CD4-positive, alpha-beta T cell (primary cell): ENCODE measurements at regions of chr2 and their contacts with region 1.

Region 1: DNA sequence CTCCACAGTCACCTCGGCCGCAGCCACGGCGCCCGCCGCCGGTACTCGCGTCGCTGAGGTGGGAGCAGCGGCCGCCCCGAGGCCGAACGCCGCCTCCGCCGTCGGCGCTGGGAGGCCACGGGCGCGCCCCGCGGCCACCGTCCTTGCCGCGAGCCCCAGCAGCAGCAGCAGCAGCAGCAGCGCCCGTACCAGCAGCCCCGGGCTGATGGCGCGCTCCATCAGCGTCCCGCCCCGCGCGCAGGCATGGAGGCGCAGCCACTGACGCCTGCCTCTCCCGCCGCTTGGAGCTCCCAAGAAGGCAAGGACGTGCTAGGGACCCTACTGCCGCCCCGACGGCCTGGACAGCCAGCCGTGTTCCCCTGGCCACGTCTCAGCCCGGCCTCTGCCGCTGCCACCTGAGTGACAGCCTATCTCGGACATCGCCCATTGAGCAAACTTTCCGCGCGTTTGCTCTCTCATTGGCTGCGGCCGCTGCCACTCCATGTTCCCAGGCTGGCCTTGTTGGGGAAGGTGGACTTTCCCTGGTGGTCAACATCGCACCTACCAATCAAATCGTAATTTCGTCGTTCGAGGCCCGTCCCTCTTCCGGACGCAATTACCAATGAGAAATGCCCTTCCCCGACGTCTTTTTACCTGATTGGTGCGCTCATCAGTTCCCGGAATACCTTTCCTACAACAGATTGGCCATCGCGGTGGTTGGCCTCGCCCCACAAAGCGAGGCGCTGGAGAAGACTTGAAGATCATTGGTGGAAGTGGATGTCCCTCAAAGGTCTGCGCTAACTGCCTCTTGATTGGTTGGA is at the start of gene EIF2AK3:
- DNase-seq: peak; percentile 86 to 99 (median 89)
- ATAC-seq: peak; percentile 85
- H3K4me3 ChIP-seq: peak within 1 kb of the TSS; percentile 80
- H3K4me3 Mint-ChIP-seq: peak within 1 kb of the TSS; percentile 96
- H3K27ac ChIP-seq: peak within 1 kb of the TSS; percentile 93 to 97
- H3K27ac Mint-ChIP-seq: no peak within 1 kb of the TSS
- H3K4me1 ChIP-seq: peaks cover 30% of the 10 kb centered on the region
- H3K4me1 Mint-ChIP-seq: peaks cover 19% of the 10 kb centered on the region
- H3K27me3 ChIP-seq: no peaks in the 10 kb centered on the region
- H3K27me3 Mint-ChIP-seq: no peaks in the 10 kb centered on the region
- CTCF ChIP-seq: no peak
- total RNA-seq, gene EIF2AK3: 30.6 to 37.0 TPM

Region 2: GRCh38 chr2:88016086-88016959 is 610.9 kb before region 1 on chr2 and contains the start of gene RNU2-63P:
- CTCF ChIA-PET with region 1: no interaction called
- POLR2A ChIA-PET with region 1: no interaction called
- intact Hi-C with region 1: loop called in 1 of 2 experiments (anchors 5 kb)
- DNase-seq: peak; percentile 58 to 89 (median 70)
- ATAC-seq: peak; percentile 89
- H3K4me3 ChIP-seq: peak within 1 kb of the TSS; percentile 93
- H3K4me3 Mint-ChIP-seq: peak within 1 kb of the TSS; percentile 95
- H3K27ac ChIP-seq: peak within 1 kb of the TSS; percentile 67 to 93
- H3K27ac Mint-ChIP-seq: peak within 1 kb of the TSS; percentile 98
- H3K4me1 ChIP-seq: peaks cover 18% of the 10 kb centered on the region
- H3K4me1 Mint-ChIP-seq: peaks cover 26% of the 10 kb centered on the region
- H3K27me3 ChIP-seq: no peaks in the 10 kb centered on the region
- H3K27me3 Mint-ChIP-seq: no peaks in the 10 kb centered on the region
- CTCF ChIP-seq: no peak
- total RNA-seq, gene RNU2-63P: 2.6 to 3.1 TPM

Region 3: GRCh38 chr2:88590998-88591613 is 36.1 kb before region 1 on chr2:
- CTCF ChIA-PET with region 1: no interaction called
- POLR2A ChIA-PET with region 1: interaction called, 3 read pairs
- intact Hi-C with region 1: loop called in 1 of 2 experiments (anchors 5 kb)
- DNase-seq: peak in 8 of 14 experiments; percentile 8 to 72 (median 46)
- ATAC-seq: peak; percentile 76
- H3K4me3 ChIP-seq: no peak overlapping the region
- H3K4me3 Mint-ChIP-seq: no peak overlapping the region
- H3K27ac ChIP-seq: no peak overlapping the region
- H3K27ac Mint-ChIP-seq: no peak overlapping the region
- H3K4me1 ChIP-seq: no peaks in the 10 kb centered on the region
- H3K4me1 Mint-ChIP-seq: peaks cover 4% of the 10 kb centered on the region
- H3K27me3 ChIP-seq: no peaks in the 10 kb centered on the region
- H3K27me3 Mint-ChIP-seq: no peaks in the 10 kb centered on the region
- CTCF ChIP-seq: peak; percentile 80

Region 4: DNA sequence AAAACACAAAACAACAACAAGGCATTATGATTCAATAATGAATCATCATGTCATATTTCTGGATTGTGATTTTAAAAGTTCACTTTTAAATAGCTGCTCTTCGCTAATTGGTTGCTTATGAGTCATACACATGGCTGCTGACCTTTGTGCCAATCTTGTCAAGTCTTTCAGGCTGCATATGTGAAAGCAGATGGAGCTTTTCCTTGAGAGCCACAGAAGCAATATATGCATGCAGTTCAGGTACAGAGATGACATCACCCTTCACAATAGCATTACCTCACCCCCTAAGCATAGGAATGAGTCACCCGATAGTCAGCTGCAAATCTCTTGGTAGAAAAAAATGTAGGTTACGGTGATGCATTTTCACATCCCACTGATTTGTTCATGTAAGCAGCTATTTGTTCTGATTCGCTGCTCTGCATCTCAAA is 27.2 kb before region 1 on chr2:
- CTCF ChIA-PET with region 1: no interaction called
- POLR2A ChIA-PET with region 1: interaction called, 10 read pairs
- intact Hi-C with region 1: no loop called
- DNase-seq: peak in 10 of 14 experiments; percentile 1 to 87 (median 24)
- ATAC-seq: peak; percentile 98
- H3K4me3 ChIP-seq: no peak overlapping the region
- H3K4me3 Mint-ChIP-seq: no peak overlapping the region
- H3K27ac ChIP-seq: no peak overlapping the region
- H3K27ac Mint-ChIP-seq: peak overlapping the region; percentile 25
- H3K4me1 ChIP-seq: no peaks in the 10 kb centered on the region
- H3K4me1 Mint-ChIP-seq: peaks cover 58% of the 10 kb centered on the region
- H3K27me3 ChIP-seq: no peaks in the 10 kb centered on the region
- H3K27me3 Mint-ChIP-seq: no peaks in the 10 kb centered on the region
- CTCF ChIP-seq: no peak

Region 5: GRCh38 chr2:88669371-88670214 is 42.3 kb after region 1 on chr2:
- CTCF ChIA-PET with region 1: interaction called, 8 read pairs
- POLR2A ChIA-PET with region 1: interaction called, 7 read pairs
- intact Hi-C with region 1: loop called in 1 of 2 experiments (anchors 1 kb)
- DNase-seq: peak in 5 of 14 experiments; percentile 7 to 51 (median 36)
- ATAC-seq: peak; percentile 55
- H3K4me3 ChIP-seq: no peak overlapping the region
- H3K4me3 Mint-ChIP-seq: no peak overlapping the region
- H3K27ac ChIP-seq: no peak overlapping the region
- H3K27ac Mint-ChIP-seq: no peak overlapping the region
- H3K4me1 ChIP-seq: no peaks in the 10 kb centered on the region
- H3K4me1 Mint-ChIP-seq: no peaks in the 10 kb centered on the region
- H3K27me3 ChIP-seq: no peaks in the 10 kb centered on the region
- H3K27me3 Mint-ChIP-seq: no peaks in the 10 kb centered on the region
- CTCF ChIP-seq: peak; percentile 48

Region 6: DNA sequence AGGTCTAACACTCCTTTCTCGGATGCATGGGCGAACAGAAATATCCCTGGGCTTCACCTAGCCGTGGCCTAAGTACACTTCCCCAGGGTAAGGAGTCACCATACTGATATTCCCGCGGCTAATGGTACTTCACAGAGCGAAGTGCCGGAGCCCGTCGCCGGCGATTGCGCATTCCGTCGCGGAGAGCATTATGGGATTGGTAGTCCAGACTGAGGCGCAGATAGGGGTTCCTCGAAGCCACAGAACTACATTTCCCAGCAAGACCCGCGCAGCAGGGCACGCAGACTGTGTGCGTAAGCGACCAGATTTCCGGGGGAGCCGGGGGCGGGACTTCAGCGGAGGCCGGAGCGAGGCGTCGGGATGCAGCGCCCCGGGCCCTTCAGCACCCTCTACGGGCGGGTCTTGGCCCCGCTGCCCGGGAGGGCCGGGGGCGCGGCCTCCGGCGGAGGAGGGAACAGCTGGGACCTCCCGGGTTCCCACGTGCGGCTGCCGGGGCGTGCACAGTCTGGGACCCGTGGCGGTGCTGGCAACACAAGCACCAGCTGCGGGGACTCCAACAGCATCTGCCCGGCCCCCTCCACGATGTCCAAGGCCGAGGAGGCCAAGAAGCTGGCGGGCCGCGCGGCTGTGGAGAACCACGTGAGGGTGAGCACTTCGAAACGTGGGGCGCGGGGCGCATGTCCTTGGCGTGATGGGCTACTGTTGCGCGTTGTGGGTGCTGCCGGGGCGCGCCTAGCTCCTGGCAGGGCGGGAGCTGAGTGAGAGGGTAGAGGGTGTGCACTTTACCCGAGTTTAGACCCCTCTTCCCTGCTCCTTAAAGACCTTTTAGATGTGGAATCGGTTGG is 64.3 kb after region 1 on chr2 and contains the start of gene RPIA:
- CTCF ChIA-PET with region 1: interaction called, 9 read pairs
- POLR2A ChIA-PET with region 1: interaction called, 55 read pairs
- intact Hi-C with region 1: loop called (anchors 1 kb)
- DNase-seq: peak; percentile 94 to 100 (median 99)
- ATAC-seq: peak; percentile 94
- H3K4me3 ChIP-seq: peak within 1 kb of the TSS; percentile 77
- H3K4me3 Mint-ChIP-seq: peak within 1 kb of the TSS; percentile 97
- H3K27ac ChIP-seq: peak within 1 kb of the TSS; percentile 78 to 84
- H3K27ac Mint-ChIP-seq: peak within 1 kb of the TSS; percentile 97
- H3K4me1 ChIP-seq: peaks cover 22% of the 10 kb centered on the region
- H3K4me1 Mint-ChIP-seq: peaks cover 70% of the 10 kb centered on the region
- H3K27me3 ChIP-seq: no peaks in the 10 kb centered on the region
- H3K27me3 Mint-ChIP-seq: no peaks in the 10 kb centered on the region
- CTCF ChIP-seq: peak; percentile 57
- total RNA-seq, gene RPIA: 21.6 to 24.7 TPM